A549 (cell line): ENCODE measurements at regions of chrX and their contacts with region 1.

Region 1: DNA sequence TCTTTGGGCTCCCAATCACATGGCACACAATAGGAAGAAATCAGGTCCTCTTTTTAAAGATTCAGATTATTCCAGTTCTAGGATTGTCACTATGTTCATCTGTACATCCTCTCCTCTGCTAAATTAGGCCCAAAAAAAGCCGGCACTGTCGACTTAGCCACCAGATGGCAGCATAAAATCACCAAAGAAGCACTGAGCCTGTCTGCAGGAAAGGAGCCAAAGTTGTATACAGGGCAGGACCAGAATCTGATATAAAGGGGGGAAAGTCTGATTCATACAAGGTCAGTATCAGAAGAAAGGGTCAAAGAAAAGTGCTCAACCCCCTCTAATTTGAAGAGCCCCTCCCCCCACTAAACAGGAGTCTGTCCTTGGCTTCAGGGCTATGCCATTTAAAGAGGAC is 292.5 kb downstream of the CHIC1 start:
- DNase-seq: peak; percentile 18 to 61
- ATAC-seq: peak; percentile 90 to 92
- H3K4me3 ChIP-seq: no peak overlapping the region
- H3K27ac ChIP-seq: peak overlapping the region in 1 of 2 experiments; percentile 32; a peak in 1 of 6 replicates
- H3K4me1 ChIP-seq: no peaks in the 10 kb centered on the region
- CTCF ChIP-seq: peak; percentile 79
- EP300 ChIP-seq: no peak
- POLR2A ChIP-seq: no peak
- RAD21 ChIP-seq: peak; percentile 93 to 95

Region 2: DNA sequence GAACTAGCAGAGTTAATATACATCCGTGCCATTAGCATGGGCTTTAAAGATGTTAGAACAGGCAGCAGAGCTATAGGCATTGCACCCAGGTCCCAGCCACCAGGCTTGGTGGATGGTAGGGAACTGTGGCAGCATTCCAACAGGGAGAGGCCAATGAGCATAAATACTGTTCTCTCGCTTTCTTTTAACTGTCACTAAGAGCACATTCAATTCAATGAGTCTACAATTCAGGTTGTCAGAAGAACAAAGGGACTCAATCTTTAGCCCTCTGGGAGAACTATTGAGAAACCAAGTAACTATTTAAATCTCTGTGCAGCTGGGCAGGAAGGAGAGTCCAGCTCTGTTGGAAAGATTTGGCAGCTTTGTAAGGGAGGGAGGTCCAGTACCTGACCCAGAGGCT is 126.9 kb before region 1 on chrX:
- CTCF ChIA-PET with region 1: no interaction called
- POLR2A ChIA-PET with region 1: no interaction called
- DNase-seq: no peak
- ATAC-seq: no peak
- H3K4me3 ChIP-seq: no peak overlapping the region
- H3K27ac ChIP-seq: no peak overlapping the region
- H3K4me1 ChIP-seq: no peaks in the 10 kb centered on the region
- CTCF ChIP-seq: no peak
- EP300 ChIP-seq: no peak
- POLR2A ChIP-seq: no peak
- RAD21 ChIP-seq: no peak

Region 3: DNA sequence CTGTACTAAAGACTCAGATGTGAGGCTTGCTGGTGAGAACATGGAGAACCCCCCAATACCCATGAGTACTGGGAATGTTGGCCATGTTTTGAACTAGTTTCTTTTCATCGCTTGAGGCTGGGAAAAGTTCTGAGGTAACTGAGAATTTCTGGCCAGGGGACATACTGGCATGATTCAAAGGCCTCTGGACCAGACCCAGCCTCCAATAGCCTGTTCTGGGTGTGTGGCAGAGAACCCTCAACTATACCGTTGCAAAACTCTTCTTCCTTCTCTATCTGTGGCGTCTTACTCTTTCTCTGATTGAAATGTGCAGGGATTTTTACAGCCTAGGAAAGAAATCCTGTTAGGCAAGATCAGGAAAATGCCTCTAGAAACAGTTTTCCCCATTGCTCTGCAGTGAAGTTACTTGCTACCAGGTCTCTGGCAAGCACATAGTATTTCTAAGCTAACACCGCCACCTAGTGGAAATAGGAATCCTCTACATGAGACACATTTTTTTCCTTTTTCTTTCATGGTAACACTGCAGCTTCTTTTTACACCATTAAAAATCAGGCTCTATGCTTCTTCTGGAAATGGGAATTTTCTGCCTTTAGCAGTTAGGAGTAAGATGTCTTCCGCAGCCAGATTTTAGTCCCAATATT is 277.7 kb after region 1 on chrX:
- CTCF ChIA-PET with region 1: interaction called, 22 read pairs
- POLR2A ChIA-PET with region 1: no interaction called
- DNase-seq: peak; percentile 46 to 62
- ATAC-seq: peak; percentile 78 to 91; a peak in 5 of 6 replicates
- H3K4me3 ChIP-seq: no peak overlapping the region
- H3K27ac ChIP-seq: no peak overlapping the region
- H3K4me1 ChIP-seq: no peaks in the 10 kb centered on the region
- CTCF ChIP-seq: peak; percentile 74
- EP300 ChIP-seq: no peak
- POLR2A ChIP-seq: no peak
- RAD21 ChIP-seq: peak; percentile 85 to 88

Region 4: GRCh38 chrX:74343343-74344279 is 488.1 kb after region 1 on chrX:
- CTCF ChIA-PET with region 1: interaction called, 16 read pairs
- POLR2A ChIA-PET with region 1: no interaction called
- DNase-seq: peak; percentile 78 to 93
- ATAC-seq: peak; percentile 100
- H3K4me3 ChIP-seq: no peak overlapping the region
- H3K27ac ChIP-seq: peak overlapping the region; percentile 49 to 81; a peak in 5 of 6 replicates
- H3K4me1 ChIP-seq: peaks cover 15% of the 10 kb centered on the region
- CTCF ChIP-seq: peak; percentile 83
- EP300 ChIP-seq: peak in 1 of 2 experiments; percentile 38; a peak in 2 of 5 replicates
- POLR2A ChIP-seq: no peak
- RAD21 ChIP-seq: peak; percentile 86 to 90